AG04450 (cell line): ENCODE measurements at regions of chr9 and their contacts with region 1.

Region 1: DNA sequence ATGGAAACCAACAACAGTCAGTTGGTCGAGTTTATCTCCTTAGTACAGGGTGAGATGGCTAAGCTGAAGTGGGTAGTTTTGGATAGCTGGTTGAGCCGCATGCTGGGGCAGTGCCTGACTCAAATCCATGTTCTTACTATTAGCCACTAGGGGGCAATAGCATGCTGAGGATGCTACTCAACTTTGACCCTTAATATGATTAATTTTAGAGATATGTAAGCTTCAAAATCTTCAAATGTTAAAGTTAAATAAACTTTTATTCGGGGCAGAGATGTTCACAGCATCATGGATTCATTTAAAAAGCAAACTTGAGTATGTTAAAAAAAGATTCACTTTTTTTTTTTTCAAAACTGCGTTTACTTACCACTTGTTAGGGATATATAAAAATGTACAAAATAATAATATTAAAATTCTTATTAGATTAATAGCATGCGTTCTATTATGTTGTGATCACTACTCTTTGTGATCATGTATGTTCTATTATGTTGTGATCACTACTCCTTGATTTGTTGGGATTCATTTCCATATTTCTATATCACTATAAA is 57.0 kb downstream of the C9orf153 start:
- DNase-seq: peak; percentile 20
- H3K4me3 ChIP-seq: no peak overlapping the region
- H3K27ac ChIP-seq: no peak overlapping the region
- H3K27me3 ChIP-seq: peaks cover 5% of the 10 kb centered on the region
- CTCF ChIP-seq: peak; percentile 86

Region 2: DNA sequence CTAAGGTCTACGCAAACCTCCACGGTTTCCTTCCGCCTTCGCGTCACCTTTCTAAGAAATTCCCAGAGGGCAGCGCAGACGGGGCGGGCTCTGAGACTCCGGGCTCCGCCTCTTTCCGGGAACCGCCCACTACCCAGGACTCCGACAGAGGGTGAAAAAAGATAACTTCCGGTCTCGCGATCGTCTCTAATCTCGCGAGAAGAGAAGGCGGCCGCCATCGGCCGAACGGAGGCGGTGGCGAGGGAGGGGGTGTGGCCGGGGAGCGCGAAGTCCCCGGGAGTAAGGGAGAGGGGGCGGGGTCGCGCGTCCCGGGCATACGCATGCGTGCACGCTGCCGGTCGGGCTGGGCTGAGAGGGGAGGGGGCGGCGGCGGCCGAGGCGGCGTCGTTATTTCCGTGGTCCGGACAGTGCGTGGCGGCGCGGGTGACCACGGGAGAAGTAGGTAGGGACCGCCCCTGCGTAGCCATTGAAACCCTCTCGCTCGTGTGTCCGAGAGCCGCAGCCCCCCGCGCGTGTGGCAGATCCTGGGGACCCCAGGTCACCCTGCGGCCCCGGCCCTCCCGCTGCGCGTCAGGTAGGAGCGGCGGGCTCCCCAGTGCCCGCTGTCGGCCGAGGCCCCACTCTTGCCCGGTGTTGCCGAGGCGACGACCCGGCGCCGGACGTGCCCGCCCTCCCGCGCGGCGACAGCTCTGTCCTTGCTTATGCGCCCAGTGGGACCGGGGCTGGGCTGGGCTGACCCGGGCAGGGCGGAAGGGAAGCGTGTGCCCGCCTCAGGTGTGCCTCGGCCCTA is 261.4 kb before region 1 on chr9 and contains the start of gene NAA35:
- CTCF ChIA-PET with region 1: no interaction called
- POLR2A ChIA-PET with region 1: no interaction called
- DNase-seq: peak; percentile 94
- H3K4me3 ChIP-seq: peak within 1 kb of the TSS; percentile 85
- H3K27ac ChIP-seq: peak within 1 kb of the TSS; percentile 89
- H3K27me3 ChIP-seq: no peaks in the 10 kb centered on the region
- CTCF ChIP-seq: no peak
- polyA plus RNA-seq, gene NAA35: 19.0 and 25.2 TPM in 2 replicates

Region 3: DNA sequence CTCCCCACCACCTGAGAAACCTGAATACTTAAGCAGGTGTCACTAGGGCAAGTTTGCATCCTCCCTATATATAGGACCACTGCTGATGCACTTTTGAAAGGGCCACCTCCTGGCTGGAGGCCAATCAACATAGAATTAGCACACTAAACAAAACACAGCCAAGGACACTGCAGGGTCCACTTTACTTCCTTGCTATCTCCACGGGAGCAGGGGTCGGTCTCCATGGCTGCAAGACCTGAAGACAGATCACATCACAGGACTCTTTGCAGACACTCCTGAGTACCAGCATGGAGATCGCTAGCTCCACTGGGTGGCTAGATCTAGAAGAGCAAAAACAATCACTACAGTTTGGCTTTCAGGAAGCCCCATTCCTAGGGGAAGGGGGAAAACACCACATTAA is 15.3 kb before region 1 on chr9:
- CTCF ChIA-PET with region 1: interaction called, 16 read pairs
- POLR2A ChIA-PET with region 1: no interaction called
- DNase-seq: no peak
- H3K4me3 ChIP-seq: no peak overlapping the region
- H3K27ac ChIP-seq: no peak overlapping the region
- H3K27me3 ChIP-seq: no peaks in the 10 kb centered on the region
- CTCF ChIP-seq: no peak

Region 4: GRCh38 chr9:86217076-86217755 is 14.8 kb after region 1 on chr9:
- CTCF ChIA-PET with region 1: interaction called, 23 read pairs
- POLR2A ChIA-PET with region 1: no interaction called
- DNase-seq: no peak
- H3K4me3 ChIP-seq: no peak overlapping the region
- H3K27ac ChIP-seq: no peak overlapping the region
- H3K27me3 ChIP-seq: peaks cover under 1% of the 10 kb centered on the region
- CTCF ChIP-seq: no peak

Region 5: DNA sequence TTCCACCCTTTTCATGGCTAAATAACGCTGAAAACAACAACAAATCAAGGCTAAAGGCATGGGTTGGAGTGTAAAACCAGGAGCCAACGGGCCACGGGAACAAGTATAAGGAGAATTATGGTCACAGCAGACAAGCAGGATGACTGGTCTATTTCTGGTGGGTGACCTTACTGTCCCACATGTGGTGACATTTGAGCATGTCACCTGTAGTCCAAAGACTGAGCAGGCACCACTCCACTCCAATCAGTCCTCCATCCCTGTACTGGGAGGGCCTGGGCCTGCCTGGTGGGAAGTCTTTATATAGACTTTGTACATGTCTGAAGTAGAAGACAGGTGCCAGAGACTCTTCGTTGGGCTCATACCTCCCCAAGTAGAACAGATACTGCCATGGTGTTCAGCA is 20.3 kb after region 1 on chr9:
- CTCF ChIA-PET with region 1: interaction called, 23 read pairs
- POLR2A ChIA-PET with region 1: no interaction called
- DNase-seq: no peak
- H3K4me3 ChIP-seq: no peak overlapping the region
- H3K27ac ChIP-seq: no peak overlapping the region
- H3K27me3 ChIP-seq: peaks cover 2% of the 10 kb centered on the region
- CTCF ChIP-seq: no peak

Region 6: DNA sequence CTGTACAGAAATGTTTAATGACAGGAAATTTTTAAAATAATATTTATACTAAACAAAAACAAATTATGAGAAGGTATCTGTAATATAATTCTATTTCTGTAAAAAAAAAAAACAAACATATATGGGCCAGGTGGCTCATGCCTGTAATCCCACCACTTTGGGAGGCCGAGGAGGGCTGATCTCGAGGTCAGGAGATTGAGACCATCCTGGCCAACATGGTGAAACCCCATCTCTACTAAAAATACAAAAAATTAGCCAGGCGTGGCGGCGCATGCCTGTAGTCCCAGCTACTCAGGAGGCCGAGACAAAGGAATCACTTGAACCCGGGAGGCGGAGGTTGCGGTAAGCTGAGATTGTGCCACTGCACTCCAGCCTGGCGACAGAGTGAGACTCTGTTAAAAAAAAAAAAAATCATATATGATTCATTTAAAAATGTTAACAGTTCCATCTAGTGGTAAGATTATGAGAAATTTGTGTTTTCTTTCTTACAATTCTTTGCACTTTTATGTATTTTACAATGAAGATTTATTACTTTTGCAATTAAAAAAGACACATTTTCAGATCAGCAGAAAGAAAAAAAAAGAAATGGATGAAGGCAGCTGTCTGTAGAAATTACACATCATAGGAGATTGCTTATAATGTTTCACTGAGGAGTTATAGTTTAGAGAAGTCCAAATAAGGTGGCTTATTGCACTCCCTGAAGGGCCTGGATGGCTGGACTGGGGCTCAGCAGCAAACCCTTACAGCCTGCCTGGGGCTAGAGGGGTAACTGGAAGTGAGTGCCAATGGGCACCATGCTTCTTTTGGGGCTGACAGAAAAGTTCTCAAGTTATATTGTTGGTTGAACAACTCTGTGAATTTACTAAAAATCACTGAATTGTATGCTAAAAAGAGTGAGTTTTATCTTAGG is 36.7 kb after region 1 on chr9:
- CTCF ChIA-PET with region 1: interaction called, 27 read pairs
- POLR2A ChIA-PET with region 1: no interaction called
- DNase-seq: no peak
- H3K4me3 ChIP-seq: no peak overlapping the region
- H3K27ac ChIP-seq: no peak overlapping the region
- H3K27me3 ChIP-seq: no peaks in the 10 kb centered on the region
- CTCF ChIP-seq: no peak

Region 7: DNA sequence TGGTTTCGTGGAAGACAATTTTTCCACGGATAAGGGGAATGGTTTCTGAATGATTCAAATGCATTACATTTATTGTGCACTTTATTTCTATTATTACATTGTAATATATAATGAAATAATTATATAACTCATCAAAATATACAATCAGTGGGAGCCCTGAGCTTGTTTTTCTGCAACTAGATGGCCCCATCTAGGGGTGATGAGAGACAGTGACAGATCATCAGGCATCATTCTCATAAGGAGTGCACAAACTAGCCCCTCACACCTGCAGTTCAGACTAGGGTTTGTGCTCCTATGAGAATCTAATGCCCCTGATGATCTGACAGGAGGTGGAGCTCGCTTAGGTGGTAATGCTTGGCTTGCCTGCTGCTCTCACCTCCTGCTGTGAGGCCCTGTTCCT is 73.6 kb after region 1 on chr9:
- CTCF ChIA-PET with region 1: interaction called, 12 read pairs
- POLR2A ChIA-PET with region 1: no interaction called
- DNase-seq: no peak
- H3K4me3 ChIP-seq: no peak overlapping the region
- H3K27ac ChIP-seq: no peak overlapping the region
- H3K27me3 ChIP-seq: no peaks in the 10 kb centered on the region
- CTCF ChIP-seq: peak; percentile 28; the same call in 1 of the 2 replicates

Region 8: GRCh38 chr9:86324308-86324707 is 121.9 kb after region 1 on chr9:
- CTCF ChIA-PET with region 1: no interaction called
- POLR2A ChIA-PET with region 1: no interaction called
- DNase-seq: peak; percentile 10
- H3K4me3 ChIP-seq: no peak overlapping the region
- H3K27ac ChIP-seq: no peak overlapping the region
- H3K27me3 ChIP-seq: no peaks in the 10 kb centered on the region
- CTCF ChIP-seq: no peak

Region 9: GRCh38 chr9:86549401-86549811 is 347.0 kb after region 1 on chr9:
- CTCF ChIA-PET with region 1: no interaction called
- POLR2A ChIA-PET with region 1: no interaction called
- DNase-seq: peak; percentile 93
- H3K4me3 ChIP-seq: no peak overlapping the region
- H3K27ac ChIP-seq: peak overlapping the region; percentile 76
- H3K27me3 ChIP-seq: no peaks in the 10 kb centered on the region
- CTCF ChIP-seq: no peak

Region 10: GRCh38 chr9:86795823-86796553 is 593.6 kb after region 1 on chr9:
- CTCF ChIA-PET with region 1: no interaction called
- POLR2A ChIA-PET with region 1: no interaction called
- DNase-seq: peak; percentile 58
- H3K4me3 ChIP-seq: no peak overlapping the region
- H3K27ac ChIP-seq: peak overlapping the region; percentile 42
- H3K27me3 ChIP-seq: no peaks in the 10 kb centered on the region
- CTCF ChIP-seq: peak; percentile 58